AG04449 (cell line): ENCODE measurements at regions of chr15 and their contacts with region 1.

Region 1: DNA sequence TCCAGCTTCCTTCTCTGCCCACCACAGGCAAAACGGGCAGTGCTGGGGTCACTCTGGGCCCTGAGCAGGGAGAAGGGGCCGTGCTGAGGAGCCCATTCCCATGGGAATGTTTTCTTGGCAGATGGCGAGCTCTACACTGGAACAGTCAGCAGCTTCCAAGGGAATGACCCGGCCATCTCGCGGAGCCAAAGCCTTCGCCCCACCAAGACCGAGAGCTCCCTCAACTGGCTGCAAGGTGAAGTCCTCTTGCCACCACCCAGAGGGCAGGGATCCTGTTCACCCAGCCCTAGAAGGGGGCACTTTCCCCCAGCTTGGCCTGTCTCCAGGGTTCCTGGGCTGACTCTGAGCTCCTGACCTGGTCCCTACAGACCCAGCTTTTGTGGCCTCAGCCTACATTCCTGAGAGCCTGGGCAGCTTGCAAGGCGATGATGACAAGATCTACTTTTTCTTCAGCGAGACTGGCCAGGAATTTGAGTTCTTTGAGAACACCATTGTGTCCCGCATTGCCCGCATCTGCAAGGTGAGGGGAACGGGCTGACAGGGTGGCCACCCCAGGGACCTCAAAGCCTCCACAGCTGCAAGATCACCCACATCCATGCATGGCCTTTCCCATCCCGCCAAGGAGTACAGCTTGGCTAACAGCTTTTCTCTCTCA is 12.4 kb downstream of the CIB1 start:
- DNase-seq: peak; percentile 56
- H3K4me3 ChIP-seq: no peak overlapping the region
- CTCF ChIP-seq: peak; percentile 92

Region 2: DNA sequence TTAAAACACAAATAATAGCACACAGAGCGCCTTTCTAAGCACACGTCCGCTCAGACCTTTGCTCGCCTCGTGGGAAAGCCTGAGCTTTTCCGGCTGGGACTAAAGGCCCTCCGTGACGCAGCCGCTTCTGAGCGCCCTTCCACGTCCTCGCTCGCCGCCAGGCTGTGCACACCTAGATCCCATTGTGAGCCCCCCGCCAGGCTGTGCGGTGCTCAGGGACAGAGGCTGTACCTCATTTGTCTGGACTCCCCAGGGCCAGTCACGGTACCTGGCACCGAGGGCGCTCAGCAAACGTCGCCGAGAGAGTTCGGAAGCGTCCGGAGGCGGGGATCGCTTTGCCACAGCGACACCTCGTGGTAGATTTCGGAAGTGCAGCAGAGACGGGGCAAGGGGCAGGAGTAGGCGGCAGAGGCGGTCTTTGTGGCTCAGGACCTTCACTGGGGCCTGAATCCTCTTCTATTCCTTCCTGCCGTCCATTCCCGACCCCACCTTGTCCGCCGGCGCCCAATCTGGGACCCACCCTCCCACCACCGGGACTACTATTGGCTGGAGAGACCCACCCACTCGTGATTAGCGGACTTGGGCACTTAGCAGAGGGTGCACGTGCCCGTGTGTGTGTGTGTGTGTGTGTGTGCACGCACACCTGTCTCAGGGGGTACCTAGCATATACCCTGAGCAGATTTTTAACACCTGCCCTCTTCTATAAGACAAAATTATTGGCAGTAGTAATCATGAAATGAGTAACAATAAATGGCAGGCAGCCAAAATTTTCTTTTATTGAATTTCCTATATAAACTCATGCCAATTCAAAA is 790.6 kb before region 1 on chr15:
- CTCF ChIA-PET with region 1: no interaction called
- POLR2A ChIA-PET with region 1: no interaction called
- DNase-seq: no peak
- H3K4me3 ChIP-seq: peak overlapping the region; percentile 58
- CTCF ChIP-seq: peak; percentile 97

Region 3: GRCh38 chr15:89893696-89894455 is 327.5 kb before region 1 on chr15 and contains the start of gene AP3S2:
- CTCF ChIA-PET with region 1: interaction called, 13 read pairs
- POLR2A ChIA-PET with region 1: no interaction called
- DNase-seq: peak; percentile 62
- H3K4me3 ChIP-seq: peak within 1 kb of the TSS; percentile 91
- CTCF ChIP-seq: no peak

Region 4: DNA sequence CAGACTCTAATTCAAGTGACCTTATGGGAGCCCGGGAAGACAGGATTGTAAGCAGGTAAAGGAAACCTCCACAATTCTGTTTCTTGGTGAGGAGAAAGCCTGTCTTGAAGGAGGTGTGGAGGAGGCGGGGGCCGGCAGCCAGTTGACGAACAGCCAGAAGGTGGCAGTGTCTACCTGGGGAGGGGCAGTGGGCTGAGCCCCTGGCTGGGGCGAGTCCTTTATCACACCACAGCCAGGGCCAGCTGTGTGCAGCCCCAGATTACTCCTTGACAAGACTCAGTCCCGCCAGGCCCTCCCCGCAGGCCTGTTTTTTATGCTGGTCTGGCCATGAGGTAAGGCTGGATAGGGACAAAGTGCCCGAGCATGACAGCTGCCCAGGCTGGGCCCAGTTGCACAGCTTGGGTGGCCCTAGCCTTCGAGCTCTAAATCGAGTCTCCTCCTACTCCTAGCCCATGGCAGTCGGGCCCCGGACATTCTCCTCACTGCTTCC is 78.2 kb before region 1 on chr15:
- CTCF ChIA-PET with region 1: interaction called, 13 read pairs
- POLR2A ChIA-PET with region 1: no interaction called
- DNase-seq: no peak
- H3K4me3 ChIP-seq: no peak overlapping the region
- CTCF ChIP-seq: peak; percentile 47

Region 5: GRCh38 chr15:90201130-90201949 is 20.0 kb before region 1 on chr15 and contains the start of gene SEMA4B:
- CTCF ChIA-PET with region 1: interaction called, 26 read pairs
- POLR2A ChIA-PET with region 1: interaction called, 3 read pairs
- DNase-seq: no peak
- H3K4me3 ChIP-seq: peak within 1 kb of the TSS; percentile 71
- CTCF ChIP-seq: no peak

Region 6: GRCh38 chr15:90233376-90234095 is 12.2 kb after region 1 on chr15 and contains the start of gene CIB1:
- CTCF ChIA-PET with region 1: interaction called, 59 read pairs
- POLR2A ChIA-PET with region 1: no interaction called
- DNase-seq: peak; percentile 57
- H3K4me3 ChIP-seq: peak within 1 kb of the TSS; percentile 83
- CTCF ChIP-seq: peak; percentile 39